Heart left ventricle (tissue), 16 donors: ENCODE measurements at regions of chr5 and their contacts with region 1.

Region 1: GRCh38 chr5:112921833-112922817 is at the start of gene REEP5:
- DNase-seq: peak; percentile 86 to 94 (median 90)
- ATAC-seq: peak; percentile 78 to 96 (median 94)
- H3K4me3 ChIP-seq: peak within 1 kb of the TSS; percentile 81 to 99 (median 91)
- H3K27ac ChIP-seq: peak within 1 kb of the TSS; percentile 88 to 100 (median 98)
- H3K4me1 ChIP-seq: peaks cover 7 to 56% (median 41%) of the 10 kb centered on the region in 12 donors
- H3K27me3 ChIP-seq: no peaks in the 10 kb centered on the region
- CTCF ChIP-seq: peak; percentile 55 to 95 (median 86)
- POLR2A ChIP-seq: peak; percentile 67 to 85
- total RNA-seq, gene REEP5: 103 to 187 (median 141) TPM

Region 2: GRCh38 chr5:112551419-112552032 is 370.6 kb before region 1 on chr5:
- intact Hi-C with region 1: loop called in 2 of 10 experiments (anchors 5 to 10 kb)
- DNase-seq: peak in 2 of 5 donors; percentile 29 to 48
- ATAC-seq: peak in 2 of 4 donors; percentile 55 to 61
- H3K4me3 ChIP-seq: no peak overlapping the region
- H3K27ac ChIP-seq: no peak overlapping the region
- H3K4me1 ChIP-seq: peaks cover 0 to 33% (median 10%) of the 10 kb centered on the region in 12 donors
- H3K27me3 ChIP-seq: no peaks in the 10 kb centered on the region
- CTCF ChIP-seq: peak; percentile 67 to 87 (median 82)
- POLR2A ChIP-seq: no peak

Region 3: DNA sequence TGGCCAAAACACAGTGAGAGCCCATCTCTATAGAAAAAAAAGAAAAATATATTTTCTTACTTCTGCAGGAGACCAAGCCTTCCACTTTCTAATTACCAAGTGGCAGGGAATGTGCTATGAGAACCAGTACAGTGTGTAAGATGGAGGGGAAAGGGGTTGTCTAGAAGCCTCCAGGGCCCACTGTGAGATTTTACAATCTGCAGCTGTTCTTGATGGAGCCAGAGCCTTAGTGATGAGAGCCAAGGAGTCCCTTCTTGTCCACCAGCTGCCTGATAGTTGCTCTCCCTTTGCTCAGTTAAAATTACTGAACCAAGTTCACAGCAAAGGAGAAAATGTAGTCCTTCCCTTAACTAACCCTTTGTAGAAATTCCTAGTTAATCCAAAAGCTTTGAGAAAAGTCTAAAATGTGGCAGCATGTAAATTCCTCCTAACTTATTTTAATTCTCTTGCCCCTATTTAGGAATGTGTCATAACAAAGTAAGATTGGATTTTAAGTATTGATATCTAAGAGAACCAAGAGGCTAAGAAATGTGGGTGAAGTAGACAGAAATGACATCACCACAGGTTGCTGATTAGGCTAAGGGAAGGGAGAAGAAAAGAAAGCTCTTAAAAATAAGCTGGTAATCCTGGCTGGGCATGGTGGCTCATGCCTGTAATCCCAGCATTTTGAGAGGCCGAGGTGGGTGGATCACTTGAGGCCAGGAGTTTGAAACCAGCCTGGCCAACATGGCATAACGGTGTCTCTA is 41.7 kb before region 1 on chr5:
- intact Hi-C with region 1: loop called in 1 of 10 experiments (anchors 5 kb)
- DNase-seq: no peak
- ATAC-seq: peak in 3 of 4 donors; percentile 25 to 61 (median 29)
- H3K4me3 ChIP-seq: no peak overlapping the region
- H3K27ac ChIP-seq: no peak overlapping the region
- H3K4me1 ChIP-seq: peaks cover 0 to 39% (median 17%) of the 10 kb centered on the region in 12 donors
- H3K27me3 ChIP-seq: no peaks in the 10 kb centered on the region
- CTCF ChIP-seq: no peak
- POLR2A ChIP-seq: no peak

Region 4: DNA sequence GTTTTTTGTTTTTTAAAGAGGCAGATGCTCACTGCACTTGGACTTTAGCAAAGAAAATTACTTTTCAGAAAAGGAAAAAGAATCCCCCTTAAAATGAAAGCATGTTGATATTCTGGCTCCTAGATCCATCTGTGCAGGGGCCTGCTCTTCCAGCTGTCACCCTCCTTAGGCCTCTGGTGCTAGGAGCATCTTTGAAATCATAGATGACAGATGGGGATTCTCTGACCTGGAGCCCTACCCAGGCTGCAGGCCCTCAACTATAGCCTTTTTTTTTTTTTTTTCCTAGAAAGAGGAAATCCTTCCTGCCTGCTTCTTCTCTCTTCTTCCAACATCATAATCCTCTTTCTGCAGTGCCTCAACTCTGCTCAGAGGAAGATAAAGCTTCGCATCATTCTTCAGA is 38.2 kb after region 1 on chr5:
- intact Hi-C with region 1: loop called in 2 of 10 experiments (anchors 5 kb)
- DNase-seq: no peak
- ATAC-seq: no peak
- H3K4me3 ChIP-seq: no peak overlapping the region
- H3K27ac ChIP-seq: no peak overlapping the region
- H3K4me1 ChIP-seq: peaks cover 0 to 52% (median 27%) of the 10 kb centered on the region in 12 donors
- H3K27me3 ChIP-seq: no peaks in the 10 kb centered on the region
- CTCF ChIP-seq: no peak
- POLR2A ChIP-seq: no peak

Region 5: DNA sequence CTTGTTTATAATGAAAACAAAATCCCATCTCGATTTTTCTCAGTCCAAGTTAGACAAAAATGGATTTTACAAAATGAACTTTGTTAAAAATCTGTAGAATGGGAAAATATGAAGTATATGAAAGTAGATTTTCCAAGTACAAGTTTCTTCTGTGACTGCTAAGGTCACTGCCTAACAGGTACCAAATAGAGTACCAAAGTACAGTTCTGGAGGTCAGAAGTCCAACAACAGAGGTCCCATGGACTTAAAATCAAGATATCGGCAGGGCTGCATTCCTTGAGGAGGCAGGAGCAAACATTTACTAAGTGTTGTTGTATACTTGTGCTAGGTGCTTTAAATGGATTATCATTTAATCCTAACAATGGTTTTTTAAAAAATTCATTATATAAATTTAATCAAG is 597.3 kb after region 1 on chr5:
- intact Hi-C with region 1: loop called in 1 of 10 experiments (anchors 5 kb)
- DNase-seq: no peak
- ATAC-seq: no peak
- H3K4me3 ChIP-seq: no peak overlapping the region
- H3K27ac ChIP-seq: no peak overlapping the region
- H3K4me1 ChIP-seq: peaks cover 0 to 64% (median 24%) of the 10 kb centered on the region in 12 donors
- H3K27me3 ChIP-seq: no peaks in the 10 kb centered on the region
- CTCF ChIP-seq: no peak
- POLR2A ChIP-seq: no peak